Activated CD4-positive, alpha-beta T cell treated with anti-CD3 and anti-CD28 coated beads, Interleukin-2, amount 10 ng/mL, durations not matched to agents 24 days and 14 days (primary cell): ENCODE measurements at regions of chr2 and their contacts with region 1.

Region 1: DNA sequence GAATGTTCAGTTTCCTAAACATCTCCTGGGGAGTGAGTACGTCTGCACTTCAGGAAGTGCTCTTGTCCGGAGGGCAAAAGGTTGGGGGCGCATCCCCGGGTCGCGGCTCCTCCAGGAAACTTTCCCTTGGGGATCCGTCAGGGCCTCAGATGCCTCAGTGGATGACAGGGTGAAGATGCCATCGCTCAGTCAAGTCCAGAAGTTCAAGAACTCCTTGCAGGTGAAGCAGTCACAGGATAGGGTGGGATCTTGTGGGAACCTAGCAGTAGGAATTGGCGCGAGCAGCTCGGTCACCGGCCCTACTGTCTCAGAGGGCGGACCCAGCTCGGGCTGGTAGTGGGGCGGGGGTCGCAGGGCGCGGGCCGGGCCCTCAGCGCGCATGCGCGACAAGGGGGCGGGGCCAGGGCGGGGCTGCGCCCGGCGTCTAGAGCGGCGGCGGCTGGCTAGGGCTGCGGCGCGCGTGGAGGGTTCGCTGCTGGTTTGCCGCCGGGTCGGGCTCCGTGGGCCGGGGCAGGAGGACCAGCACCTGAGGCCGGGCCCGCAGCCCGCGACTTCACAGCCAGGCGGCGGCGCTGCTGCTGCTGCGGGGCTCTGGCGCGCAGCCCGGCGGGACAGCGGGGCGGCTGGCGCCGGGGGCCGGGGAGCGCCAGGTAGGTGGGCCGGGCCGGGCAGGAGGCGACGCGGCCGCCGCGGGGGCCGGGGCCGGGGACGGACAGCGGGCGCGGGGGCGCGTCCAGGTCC is at the start of gene INPP4A:
- DNase-seq: peak; percentile 93
- H3K4me3 Mint-ChIP-seq: peak within 1 kb of the TSS; percentile 89
- H3K27ac Mint-ChIP-seq: peak within 1 kb of the TSS; percentile 91
- H3K4me1 Mint-ChIP-seq: peaks cover 37% of the 10 kb centered on the region
- H3K27me3 Mint-ChIP-seq: no peaks in the 10 kb centered on the region
- total RNA-seq, gene INPP4A: 40.2 and 45.0 TPM in 2 replicates

Region 2: GRCh38 chr2:97663965-97664635 is 780.5 kb before region 1 on chr2 and contains the start of gene ACTR1B:
- intact Hi-C with region 1: loop called (anchors 10 kb)
- DNase-seq: peak; percentile 99
- H3K4me3 Mint-ChIP-seq: peak within 1 kb of the TSS; percentile 94
- H3K27ac Mint-ChIP-seq: peak within 1 kb of the TSS; percentile 98
- H3K4me1 Mint-ChIP-seq: peaks cover 30% of the 10 kb centered on the region
- H3K27me3 Mint-ChIP-seq: no peaks in the 10 kb centered on the region
- total RNA-seq, gene ACTR1B: 122 TPM in 2 replicates

Region 3: GRCh38 chr2:98455494-98455976 is 10.9 kb after region 1 on chr2:
- intact Hi-C with region 1: loop called (anchors 1 kb)
- DNase-seq: peak; percentile 88
- H3K4me3 Mint-ChIP-seq: peak overlapping the region; percentile 76
- H3K27ac Mint-ChIP-seq: peak overlapping the region; percentile 95
- H3K4me1 Mint-ChIP-seq: peaks cover 88% of the 10 kb centered on the region
- H3K27me3 Mint-ChIP-seq: no peaks in the 10 kb centered on the region

Region 4: GRCh38 chr2:98508709-98509066 is 64.1 kb after region 1 on chr2:
- intact Hi-C with region 1: loop called (anchors 1 kb)
- DNase-seq: peak; percentile 82
- H3K4me3 Mint-ChIP-seq: peak overlapping the region; percentile 73
- H3K27ac Mint-ChIP-seq: peak overlapping the region; percentile 91
- H3K4me1 Mint-ChIP-seq: peaks cover 69% of the 10 kb centered on the region
- H3K27me3 Mint-ChIP-seq: no peaks in the 10 kb centered on the region

Region 5: DNA sequence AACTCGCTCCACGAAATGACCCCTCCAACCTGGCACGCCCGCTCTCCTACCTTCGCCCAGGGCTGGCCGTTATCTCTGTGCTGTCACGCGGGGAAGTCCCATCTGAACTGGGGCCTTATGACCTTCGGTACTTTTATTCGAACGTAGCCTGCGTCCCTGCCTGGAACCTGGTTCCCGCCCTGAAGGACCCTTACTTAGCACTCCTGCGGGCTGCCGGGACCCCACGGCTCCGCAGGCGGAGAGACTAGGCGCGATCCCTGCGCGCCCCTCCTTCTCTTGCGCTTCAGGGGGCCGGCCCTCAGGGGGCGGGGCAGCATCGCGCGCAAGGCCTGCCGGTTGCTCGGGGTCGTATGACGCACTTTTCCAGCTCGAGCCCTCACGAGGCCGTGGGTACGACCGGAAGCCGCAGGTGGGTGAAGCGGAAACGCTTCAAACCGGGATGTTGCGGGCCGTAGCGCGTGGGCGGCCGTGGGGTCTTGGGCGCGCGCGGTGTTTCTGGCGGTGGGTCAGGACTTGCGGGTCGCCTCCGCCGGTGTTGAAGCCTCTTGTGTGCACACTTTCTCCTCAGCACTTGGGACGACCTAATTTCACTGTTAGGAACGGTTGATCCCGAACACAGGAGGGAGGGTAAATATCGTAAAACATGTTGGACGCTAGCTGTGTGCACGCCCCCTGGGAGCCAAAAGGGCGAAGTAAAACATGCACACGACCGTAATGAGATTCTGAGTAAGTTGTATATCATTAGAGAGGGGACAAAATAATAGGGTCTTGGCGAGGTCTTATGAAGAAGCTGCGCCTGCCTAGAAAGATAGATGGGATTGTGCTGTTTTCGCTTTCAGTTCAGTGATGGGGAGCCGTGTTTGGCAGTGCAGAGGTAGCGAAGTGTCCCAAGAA is 710.3 kb after region 1 on chr2 and contains the starts of genes LIPT1 and TSGA10:
- intact Hi-C with region 1: loop called (anchors 10 kb)
- DNase-seq: peak; percentile 98
- H3K4me3 Mint-ChIP-seq: no peak within 1 kb of the TSS
- H3K27ac Mint-ChIP-seq: peak within 1 kb of the TSS; percentile 83
- H3K4me1 Mint-ChIP-seq: peaks cover 35% of the 10 kb centered on the region
- H3K27me3 Mint-ChIP-seq: no peaks in the 10 kb centered on the region
- total RNA-seq, gene LIPT1: 3.3 and 3.9 TPM in 2 replicates
- total RNA-seq, gene TSGA10: 3.2 and 3.7 TPM in 2 replicates